Activated CD4-positive, alpha-beta T cell treated with anti-CD3 and anti-CD28 coated beads for 36 hours (primary cell): ENCODE measurements at regions of chr10 and their contacts with region 1.

Region 1: DNA sequence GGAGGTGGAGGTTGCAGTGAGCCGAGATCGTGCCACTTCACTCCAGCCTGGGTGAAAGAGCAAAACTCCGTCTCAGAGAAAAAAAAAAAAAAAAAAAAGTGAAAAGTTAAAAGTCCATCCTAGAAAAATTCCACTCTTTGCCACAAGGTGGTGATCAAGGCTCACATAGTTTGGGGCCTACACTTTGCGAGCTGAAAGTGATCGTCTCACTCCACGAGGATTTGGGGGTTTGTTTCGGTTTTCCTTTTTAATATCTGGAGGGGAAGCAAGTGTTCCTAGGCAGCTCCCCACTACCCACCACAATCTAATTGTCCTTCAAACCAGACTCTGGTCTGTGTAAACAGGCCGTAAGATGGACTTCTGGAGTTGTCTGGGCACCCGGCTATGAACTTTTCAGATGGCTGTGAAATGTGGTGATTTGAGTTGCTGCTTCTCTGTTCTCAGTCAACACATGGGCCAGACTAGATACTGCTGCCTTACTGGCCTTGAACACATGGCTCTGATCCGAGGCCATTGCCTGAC is 27.1 kb downstream of the PRLHR start:
- DNase-seq: peak; percentile 55
- ATAC-seq: peak; percentile 73
- H3K4me3 Mint-ChIP-seq: no peak overlapping the region
- H3K27ac Mint-ChIP-seq: no peak overlapping the region
- H3K4me1 Mint-ChIP-seq: peaks cover 4% of the 10 kb centered on the region
- H3K27me3 Mint-ChIP-seq: no peaks in the 10 kb centered on the region

Region 2: DNA sequence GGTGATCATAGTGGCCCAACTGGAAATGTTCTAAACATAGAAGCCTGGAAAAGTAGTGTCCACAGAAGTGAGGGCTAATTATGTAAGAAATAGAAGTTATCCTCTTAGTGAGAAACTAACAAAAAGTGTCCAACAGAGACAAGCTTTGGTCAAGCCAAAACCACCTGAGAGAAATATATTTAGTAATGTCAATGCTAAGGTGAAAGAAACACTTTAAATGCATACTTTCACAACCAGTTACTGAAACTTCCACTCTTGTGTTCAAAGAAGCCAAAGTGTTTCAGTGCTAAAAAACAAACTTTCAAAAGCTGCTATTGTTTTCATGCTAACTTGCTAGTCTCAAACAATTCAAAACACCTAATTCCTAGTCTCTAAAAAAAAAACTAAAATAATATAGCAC is 539.8 kb before region 1 on chr10:
- CTCF ChIA-PET with region 1: no interaction called
- POLR2A ChIA-PET with region 1: no interaction called
- intact Hi-C with region 1: no loop called
- DNase-seq: no peak
- ATAC-seq: no peak
- H3K4me3 Mint-ChIP-seq: no peak overlapping the region
- H3K27ac Mint-ChIP-seq: no peak overlapping the region
- H3K4me1 Mint-ChIP-seq: peaks cover 11% of the 10 kb centered on the region
- H3K27me3 Mint-ChIP-seq: no peaks in the 10 kb centered on the region

Region 3: DNA sequence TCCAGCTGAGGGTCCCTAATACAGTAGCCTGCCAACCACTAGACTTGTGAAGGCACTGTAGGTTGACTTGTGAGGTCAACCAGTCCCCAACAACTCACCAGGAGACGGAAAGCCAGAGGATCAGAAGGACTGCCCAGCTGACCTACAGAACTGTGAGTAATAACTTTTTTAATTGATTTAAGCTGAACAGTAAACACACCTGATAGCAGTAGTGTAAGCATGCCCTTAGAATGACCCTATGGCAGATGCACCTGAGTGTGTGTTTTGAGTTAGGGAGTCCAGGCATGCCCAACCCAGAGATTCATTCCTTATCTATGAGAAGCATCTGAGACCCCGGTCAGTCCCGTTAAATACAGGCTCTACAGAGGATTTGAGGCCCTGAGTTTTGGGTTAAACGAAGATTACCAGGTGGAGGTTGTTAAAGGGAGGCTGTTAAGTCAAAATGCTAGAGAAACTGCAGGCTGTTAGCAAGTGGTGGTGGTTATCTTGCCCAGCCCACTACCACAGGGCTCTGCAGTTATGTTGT is 13.0 kb after region 1 on chr10:
- CTCF ChIA-PET with region 1: interaction called, 16 read pairs
- POLR2A ChIA-PET with region 1: no interaction called
- intact Hi-C with region 1: no loop called
- DNase-seq: no peak
- ATAC-seq: no peak
- H3K4me3 Mint-ChIP-seq: no peak overlapping the region
- H3K27ac Mint-ChIP-seq: no peak overlapping the region
- H3K4me1 Mint-ChIP-seq: no peaks in the 10 kb centered on the region
- H3K27me3 Mint-ChIP-seq: no peaks in the 10 kb centered on the region

Region 4: GRCh38 chr10:118712930-118713634 is 144.7 kb after region 1 on chr10:
- CTCF ChIA-PET with region 1: interaction called, 81 read pairs
- POLR2A ChIA-PET with region 1: no interaction called
- intact Hi-C with region 1: no loop called
- DNase-seq: peak; percentile 18
- ATAC-seq: no peak
- H3K4me3 Mint-ChIP-seq: no peak overlapping the region
- H3K27ac Mint-ChIP-seq: no peak overlapping the region
- H3K4me1 Mint-ChIP-seq: peaks cover 9% of the 10 kb centered on the region
- H3K27me3 Mint-ChIP-seq: no peaks in the 10 kb centered on the region

Region 5: DNA sequence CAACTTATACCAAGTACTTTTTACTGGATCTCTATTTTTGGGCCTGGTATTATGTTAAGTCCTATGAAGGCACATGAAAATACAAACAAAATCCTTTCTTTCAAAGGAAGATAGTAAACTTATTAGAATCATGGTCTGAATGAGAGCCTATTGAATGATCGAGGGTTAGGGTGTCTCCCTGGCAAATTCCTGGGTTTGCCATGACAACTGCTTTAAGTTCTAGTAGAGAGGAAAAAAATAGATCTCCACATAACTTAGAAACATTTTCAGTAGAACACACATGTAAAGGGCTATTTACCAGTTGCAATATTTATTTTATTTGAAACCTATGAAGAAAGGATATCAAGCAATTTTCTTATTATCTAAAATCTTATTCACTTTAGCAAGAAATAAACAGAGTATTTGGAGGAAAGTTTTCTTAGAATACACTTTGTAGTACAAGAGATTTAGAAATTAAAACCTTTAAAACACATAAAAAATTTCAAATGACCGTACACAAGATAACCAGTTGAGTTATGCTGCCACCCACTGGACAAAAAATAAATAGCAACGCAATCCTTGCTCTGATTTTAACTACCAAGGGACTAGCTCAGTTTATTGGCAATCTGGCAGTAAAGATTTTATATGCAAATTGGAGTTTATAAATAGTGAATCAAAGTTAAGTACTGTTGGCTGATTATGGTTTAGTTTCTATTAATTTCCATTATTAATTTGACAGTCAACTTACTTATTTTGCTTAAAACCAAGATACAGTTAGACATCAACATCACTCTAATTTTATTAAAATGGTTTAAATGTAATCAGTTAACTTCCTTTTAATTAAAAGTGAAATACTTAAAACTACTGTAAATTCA is 152.5 kb after region 1 on chr10:
- CTCF ChIA-PET with region 1: interaction called, 81 read pairs
- POLR2A ChIA-PET with region 1: no interaction called
- intact Hi-C with region 1: loop called (anchors 1 kb)
- DNase-seq: peak; percentile 69
- ATAC-seq: peak; percentile 71
- H3K4me3 Mint-ChIP-seq: no peak overlapping the region
- H3K27ac Mint-ChIP-seq: no peak overlapping the region
- H3K4me1 Mint-ChIP-seq: peaks cover 6% of the 10 kb centered on the region
- H3K27me3 Mint-ChIP-seq: no peaks in the 10 kb centered on the region

Region 6: DNA sequence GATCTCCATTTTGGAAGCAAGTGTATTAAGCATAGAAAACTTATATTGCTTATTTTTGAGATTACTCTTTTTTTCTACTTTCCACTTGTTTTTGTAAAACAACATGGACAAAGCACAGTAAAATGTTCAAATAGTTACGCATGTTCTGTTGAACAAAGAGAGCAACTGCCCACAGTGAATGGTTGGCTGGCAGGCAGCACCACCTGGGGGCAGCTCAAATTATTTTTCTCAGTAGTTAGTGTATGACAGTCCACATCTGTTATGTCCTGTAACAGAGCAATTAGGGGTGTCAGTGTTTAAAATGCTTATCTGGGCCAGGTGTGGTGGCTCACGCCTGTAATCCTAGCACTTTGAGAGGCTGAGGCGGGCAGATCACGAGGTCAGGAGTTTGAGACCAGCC is 232.5 kb after region 1 on chr10:
- CTCF ChIA-PET with region 1: no interaction called
- POLR2A ChIA-PET with region 1: no interaction called
- intact Hi-C with region 1: loop called in 1 of 2 experiments (anchors 1 kb)
- DNase-seq: peak; percentile 30
- ATAC-seq: no peak
- H3K4me3 Mint-ChIP-seq: no peak overlapping the region
- H3K27ac Mint-ChIP-seq: no peak overlapping the region
- H3K4me1 Mint-ChIP-seq: no peaks in the 10 kb centered on the region
- H3K27me3 Mint-ChIP-seq: peaks cover 7% of the 10 kb centered on the region

Region 7: DNA sequence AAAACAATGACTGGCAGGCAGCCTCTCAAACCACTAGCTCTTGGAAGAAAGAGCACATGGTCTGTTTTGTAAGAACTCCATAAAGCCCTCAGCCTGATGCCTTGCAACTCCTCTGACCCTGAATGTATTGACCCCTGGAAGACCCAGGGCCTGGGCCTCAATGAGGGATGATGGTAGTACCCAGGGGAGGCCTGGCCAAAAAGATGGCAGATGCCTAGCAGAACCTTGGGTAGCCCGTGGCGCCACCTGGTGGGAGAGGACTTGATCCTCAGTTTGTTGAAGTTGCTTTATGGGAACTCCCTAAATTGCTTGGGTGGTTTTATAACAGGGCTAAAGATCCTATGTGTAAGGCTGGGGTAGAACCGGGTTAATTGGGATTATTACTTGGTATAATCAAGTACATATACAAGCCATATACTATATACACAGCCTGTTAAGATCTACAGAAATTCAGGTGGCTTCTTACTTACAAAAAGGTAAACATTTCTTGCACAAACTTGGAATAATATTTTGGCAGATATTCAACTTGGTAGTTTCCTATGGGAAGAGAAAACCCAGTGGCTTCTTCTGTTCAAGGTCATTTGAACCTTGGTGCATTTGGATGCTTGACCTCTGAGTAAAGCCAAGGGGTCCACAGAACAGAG is 282.2 kb after region 1 on chr10:
- CTCF ChIA-PET with region 1: interaction called, 20 read pairs
- POLR2A ChIA-PET with region 1: no interaction called
- intact Hi-C with region 1: loop called (anchors 1 kb)
- DNase-seq: peak; percentile 93
- ATAC-seq: peak; percentile 90
- H3K4me3 Mint-ChIP-seq: no peak overlapping the region
- H3K27ac Mint-ChIP-seq: no peak overlapping the region
- H3K4me1 Mint-ChIP-seq: no peaks in the 10 kb centered on the region
- H3K27me3 Mint-ChIP-seq: peaks cover 2% of the 10 kb centered on the region

Region 8: DNA sequence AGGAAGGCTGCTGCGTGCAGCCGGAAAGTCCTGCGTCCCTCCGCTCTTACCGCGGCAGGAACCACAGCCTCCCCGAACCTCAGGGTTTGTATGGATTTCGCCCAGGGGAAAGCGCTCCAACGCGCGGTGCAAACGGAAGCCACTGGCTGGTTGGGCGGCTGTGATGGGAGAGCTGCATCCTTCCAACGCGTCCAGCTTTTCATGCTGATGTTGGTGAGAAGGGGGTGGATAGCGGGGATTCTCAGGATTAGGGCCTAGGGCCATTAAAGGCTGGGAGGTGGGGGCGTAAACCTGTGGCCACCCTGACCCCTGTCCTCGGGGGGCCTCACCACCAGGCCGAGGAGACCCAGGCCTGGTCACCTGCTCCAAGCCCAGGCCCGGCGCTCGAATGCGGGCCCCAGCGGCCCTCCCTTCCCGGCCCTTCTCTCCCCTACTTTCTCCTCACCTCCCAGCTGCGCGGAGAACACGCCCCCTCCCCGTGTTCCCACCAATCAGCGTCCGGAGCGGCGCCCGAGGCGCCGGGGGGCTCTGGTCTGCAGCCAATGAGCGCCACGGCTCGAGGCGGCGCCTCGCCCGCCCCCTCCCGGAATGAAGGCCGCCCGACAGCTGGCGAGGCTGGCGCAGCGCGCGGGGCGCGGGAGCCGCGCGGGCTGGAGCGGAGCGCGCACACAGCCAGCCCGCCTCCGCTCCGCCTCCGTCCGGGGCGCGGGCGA is 460.7 kb after region 1 on chr10:
- CTCF ChIA-PET with region 1: no interaction called
- POLR2A ChIA-PET with region 1: no interaction called
- intact Hi-C with region 1: loop called in 1 of 2 experiments (anchors 5 kb)
- DNase-seq: peak; percentile 85
- ATAC-seq: peak; percentile 74
- H3K4me3 Mint-ChIP-seq: peak overlapping the region; percentile 47
- H3K27ac Mint-ChIP-seq: no peak overlapping the region
- H3K4me1 Mint-ChIP-seq: peaks cover 16% of the 10 kb centered on the region
- H3K27me3 Mint-ChIP-seq: no peaks in the 10 kb centered on the region